Esophagus squamous epithelium (tissue), 5 donors: ENCODE measurements at regions of chr15 and their contacts with region 1.

Region 1: GRCh38 chr15:25106209-25106608 is 151.4 kb downstream of the SNRPN start:
- DNase-seq: no peak
- H3K4me3 ChIP-seq: no peak overlapping the region
- H3K27ac ChIP-seq: no peak overlapping the region
- H3K4me1 ChIP-seq: no peaks in the 10 kb centered on the region
- H3K27me3 ChIP-seq: no peaks in the 10 kb centered on the region
- CTCF ChIP-seq: no peak
- POLR2A ChIP-seq: no peak

Region 2: DNA sequence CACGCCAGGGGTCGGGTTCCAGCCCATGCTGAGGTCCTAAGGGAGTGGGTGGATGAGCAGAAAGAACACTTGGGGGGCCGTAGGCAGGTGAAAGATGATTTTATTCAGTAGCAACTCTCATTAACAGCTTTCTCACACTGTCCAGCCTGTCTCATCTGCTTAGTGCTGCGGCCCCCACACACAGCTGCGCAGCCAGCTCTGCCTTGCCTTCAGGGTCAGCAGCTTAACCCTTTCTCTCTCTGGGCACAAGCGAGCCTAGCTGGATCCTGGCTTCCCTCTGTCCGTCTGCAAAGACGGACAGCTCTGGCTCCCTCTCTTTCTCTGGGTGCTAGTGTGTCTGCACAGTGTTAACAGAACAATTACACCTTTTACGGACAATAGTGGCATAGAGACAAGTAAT is 409.4 kb before region 1 on chr15:
- intact Hi-C with region 1: no loop called
- DNase-seq: no peak
- H3K4me3 ChIP-seq: no peak overlapping the region
- H3K27ac ChIP-seq: no peak overlapping the region
- H3K4me1 ChIP-seq: no peaks in the 10 kb centered on the region
- H3K27me3 ChIP-seq: no peaks in the 10 kb centered on the region
- CTCF ChIP-seq: no peak
- POLR2A ChIP-seq: no peak

Region 3: DNA sequence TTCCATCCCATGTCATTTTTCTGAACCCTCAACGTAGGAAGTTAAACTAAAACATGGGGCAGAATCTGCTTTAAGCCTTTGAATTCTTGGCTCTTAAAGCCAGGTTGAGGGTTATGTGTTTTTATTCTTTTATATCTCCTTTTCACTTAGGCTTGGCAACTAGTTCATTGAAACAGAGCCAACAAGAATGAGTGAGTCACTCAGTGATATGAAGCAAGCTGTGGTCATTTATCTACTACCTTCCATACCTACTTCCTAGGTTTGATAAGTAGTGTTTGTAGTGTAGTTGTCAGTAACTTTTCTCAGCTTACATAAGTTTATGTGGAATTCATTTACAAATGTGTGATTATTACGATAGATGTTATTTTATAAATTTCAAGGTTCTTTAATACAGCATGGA is 84.0 kb before region 1 on chr15:
- intact Hi-C with region 1: no loop called
- DNase-seq: no peak
- H3K4me3 ChIP-seq: no peak overlapping the region
- H3K27ac ChIP-seq: no peak overlapping the region
- H3K4me1 ChIP-seq: no peaks in the 10 kb centered on the region
- H3K27me3 ChIP-seq: no peaks in the 10 kb centered on the region
- CTCF ChIP-seq: no peak
- POLR2A ChIP-seq: no peak

Region 4: GRCh38 chr15:25169318-25169717 is 63.1 kb after region 1 on chr15:
- intact Hi-C with region 1: loop called (anchors 10 kb)
- DNase-seq: no peak
- H3K4me3 ChIP-seq: no peak overlapping the region
- H3K27ac ChIP-seq: no peak overlapping the region
- H3K4me1 ChIP-seq: no peaks in the 10 kb centered on the region
- H3K27me3 ChIP-seq: no peaks in the 10 kb centered on the region
- CTCF ChIP-seq: no peak
- POLR2A ChIP-seq: no peak

Region 5: DNA sequence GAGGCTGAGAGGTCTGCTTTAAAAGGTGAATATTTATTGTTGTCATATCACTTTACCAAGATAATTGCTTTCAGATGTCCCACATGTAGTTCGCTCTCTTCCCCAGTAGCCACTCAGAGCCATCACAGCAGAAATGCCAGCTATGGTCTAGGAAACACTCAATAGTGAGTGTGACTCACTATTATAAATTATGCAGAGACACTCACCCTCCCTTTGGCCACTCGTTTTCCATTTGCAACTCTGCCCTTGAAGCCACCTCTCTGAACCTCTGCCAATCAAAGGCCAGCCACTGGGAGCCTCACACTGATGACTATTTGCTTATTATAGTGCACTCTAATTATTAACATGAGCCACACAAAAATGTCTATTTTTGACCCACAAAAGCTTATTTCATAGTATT is 1085.0 kb after region 1 on chr15:
- intact Hi-C with region 1: no loop called
- DNase-seq: no peak
- H3K4me3 ChIP-seq: no peak overlapping the region
- H3K27ac ChIP-seq: no peak overlapping the region
- H3K4me1 ChIP-seq: no peaks in the 10 kb centered on the region
- H3K27me3 ChIP-seq: no peaks in the 10 kb centered on the region
- CTCF ChIP-seq: no peak
- POLR2A ChIP-seq: no peak